Transverse colon (tissue), 4 donors: ENCODE measurements at regions of chr2 and their contacts with region 1.

Region 1: DNA sequence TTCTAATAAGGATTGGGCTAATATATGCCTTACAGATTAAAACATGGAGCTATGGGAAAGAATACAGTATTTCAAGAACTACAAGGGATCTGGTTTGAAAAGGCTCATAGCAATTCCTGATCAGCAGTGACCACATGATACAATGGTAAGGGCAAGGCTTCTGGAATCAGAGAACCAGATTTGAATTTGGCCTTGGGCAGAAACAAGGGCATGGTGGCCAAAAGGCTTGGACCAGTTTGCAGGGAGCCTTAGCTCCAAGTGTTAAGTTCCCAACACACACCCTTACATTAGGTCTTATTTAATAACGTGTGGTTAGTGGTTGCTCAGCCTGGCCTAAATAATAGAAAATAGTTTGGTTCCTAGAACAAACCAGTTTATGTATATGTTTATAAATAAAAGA is 87.7 kb downstream of the ZAP70 start:
- DNase-seq: no peak
- H3K4me3 ChIP-seq: no peak overlapping the region
- H3K27ac ChIP-seq: no peak overlapping the region
- H3K4me1 ChIP-seq: no peaks in the 10 kb centered on the region
- H3K27me3 ChIP-seq: no peaks in the 10 kb centered on the region
- CTCF ChIP-seq: no peak
- EP300 ChIP-seq: no peak
- POLR2A ChIP-seq: no peak

Region 2: GRCh38 chr2:97858442-97858841 is 57.4 kb after region 1 on chr2:
- in situ Hi-C with region 1: no loop called
- intact Hi-C with region 1: no loop called
- DNase-seq: no peak
- H3K4me3 ChIP-seq: no peak overlapping the region
- H3K27ac ChIP-seq: no peak overlapping the region
- H3K4me1 ChIP-seq: no peaks in the 10 kb centered on the region
- H3K27me3 ChIP-seq: no peaks in the 10 kb centered on the region
- CTCF ChIP-seq: no peak
- EP300 ChIP-seq: no peak
- POLR2A ChIP-seq: no peak

Region 3: GRCh38 chr2:98369710-98370239 is 568.7 kb after region 1 on chr2:
- in situ Hi-C with region 1: no loop called
- intact Hi-C with region 1: no loop called
- DNase-seq: no peak
- H3K4me3 ChIP-seq: no peak overlapping the region
- H3K27ac ChIP-seq: no peak overlapping the region
- H3K4me1 ChIP-seq: no peaks in the 10 kb centered on the region
- H3K27me3 ChIP-seq: no peaks in the 10 kb centered on the region
- CTCF ChIP-seq: no peak
- EP300 ChIP-seq: no peak
- POLR2A ChIP-seq: no peak

Region 4: GRCh38 chr2:98385050-98385699 is 584.1 kb after region 1 on chr2:
- in situ Hi-C with region 1: loop called (anchors 5 to 25 kb)
- intact Hi-C with region 1: loop called (anchors 2 kb)
- DNase-seq: peak; percentile 84
- H3K4me3 ChIP-seq: no peak overlapping the region
- H3K27ac ChIP-seq: no peak overlapping the region
- H3K4me1 ChIP-seq: peaks cover 0 to 3% (median 1%) of the 10 kb centered on the region in 4 donors
- H3K27me3 ChIP-seq: no peaks in the 10 kb centered on the region
- CTCF ChIP-seq: peak; percentile 90 to 99 (median 95)
- EP300 ChIP-seq: no peak
- POLR2A ChIP-seq: no peak